CD4-positive, alpha-beta memory T cell (primary cell): ENCODE measurements at regions of chr2 and their contacts with region 1.

Region 1: GRCh38 chr2:223837287-223838061 is at the start of gene AP1S3:
- DNase-seq: peak; percentile 67 to 86 (median 69)
- H3K4me3 ChIP-seq: peak within 1 kb of the TSS; percentile 36 to 64
- H3K4me3 Mint-ChIP-seq: peak within 1 kb of the TSS; percentile 92 to 98 (median 94)
- H3K27ac ChIP-seq: peak within 1 kb of the TSS; percentile 52
- H3K27ac Mint-ChIP-seq: peak within 1 kb of the TSS; percentile 82 to 94 (median 90)
- H3K4me1 ChIP-seq: peaks cover 8% of the 10 kb centered on the region
- H3K4me1 Mint-ChIP-seq: peaks cover 9 to 12% (median 10%) of the 10 kb centered on the region in 4 donors
- H3K27me3 ChIP-seq: no peaks in the 10 kb centered on the region
- H3K27me3 Mint-ChIP-seq: no peaks in the 10 kb centered on the region
- total RNA-seq, gene AP1S3: 0.96 to 1.1 TPM

Region 2: GRCh38 chr2:223727562-223727961 is 109.9 kb before region 1 on chr2:
- CTCF ChIA-PET with region 1: no interaction called
- POLR2A ChIA-PET with region 1: no interaction called
- intact Hi-C with region 1: loop called (anchors 1 kb)
- DNase-seq: peak in 4 of 5 donors; percentile 21 to 25 (median 24)
- H3K4me3 ChIP-seq: no peak overlapping the region
- H3K4me3 Mint-ChIP-seq: no peak overlapping the region
- H3K27ac ChIP-seq: no peak overlapping the region
- H3K27ac Mint-ChIP-seq: no peak overlapping the region
- H3K4me1 ChIP-seq: no peaks in the 10 kb centered on the region
- H3K4me1 Mint-ChIP-seq: no peaks in the 10 kb centered on the region
- H3K27me3 ChIP-seq: no peaks in the 10 kb centered on the region
- H3K27me3 Mint-ChIP-seq: peaks cover 3 to 4% of the 10 kb centered on the region in 2 donors

Region 3: GRCh38 chr2:223865907-223866508 is 28.5 kb after region 1 on chr2:
- CTCF ChIA-PET with region 1: interaction called, 8 read pairs
- POLR2A ChIA-PET with region 1: no interaction called
- intact Hi-C with region 1: loop called (anchors 1 kb)
- DNase-seq: peak in 1 of 5 donors; percentile 9
- H3K4me3 ChIP-seq: no peak overlapping the region
- H3K4me3 Mint-ChIP-seq: peak overlapping the region in 4 of 8 donors; percentile 36 to 66 (median 52)
- H3K27ac ChIP-seq: no peak overlapping the region
- H3K27ac Mint-ChIP-seq: peak overlapping the region in 6 of 7 donors; percentile 13 to 74 (median 38)
- H3K4me1 ChIP-seq: peaks cover 24% of the 10 kb centered on the region
- H3K4me1 Mint-ChIP-seq: peaks cover 20 to 25% (median 21%) of the 10 kb centered on the region in 4 donors
- H3K27me3 ChIP-seq: no peaks in the 10 kb centered on the region
- H3K27me3 Mint-ChIP-seq: no peaks in the 10 kb centered on the region

Region 4: DNA sequence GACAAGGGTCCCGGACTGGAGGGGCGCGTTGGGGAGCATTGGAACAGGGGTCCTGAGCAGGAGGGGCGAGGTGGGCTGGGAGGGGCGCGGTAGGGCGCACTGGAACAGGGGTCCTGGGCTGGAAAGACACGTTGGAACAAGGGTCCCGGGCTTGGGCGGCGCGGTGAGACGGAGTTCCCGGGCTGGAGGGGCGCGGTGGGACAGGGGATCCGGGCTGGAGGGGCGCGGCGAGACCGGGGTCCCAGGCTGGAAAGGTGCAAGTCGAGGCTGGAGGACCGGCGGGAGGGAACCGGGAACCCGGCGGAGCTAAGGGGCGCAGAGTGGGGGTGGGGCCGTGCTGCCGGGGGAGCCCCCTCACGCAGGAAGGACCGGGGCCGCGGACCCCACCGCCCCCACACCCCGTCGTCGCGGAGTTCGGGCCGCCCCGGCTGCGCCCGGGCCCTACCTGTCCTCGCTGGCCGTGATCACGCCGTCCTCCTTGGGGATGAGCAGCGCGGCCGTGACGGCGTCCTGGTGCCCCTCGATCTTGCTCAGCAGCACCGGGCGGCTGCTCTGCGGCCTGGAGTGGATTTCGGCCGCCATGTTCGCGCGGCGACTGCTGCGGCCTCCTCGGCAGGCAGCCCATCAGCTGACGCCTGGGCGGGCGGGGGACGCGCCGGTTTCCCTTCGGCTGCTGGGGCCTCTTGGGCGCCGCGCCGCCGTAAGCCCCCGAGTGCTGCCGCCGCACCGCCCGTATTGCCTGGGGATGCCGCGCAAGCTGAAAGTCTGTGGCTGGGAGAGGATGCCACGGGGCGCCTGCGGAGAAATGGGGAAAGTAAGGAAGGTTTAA is 107.4 kb after region 1 on chr2 and contains the start of gene WDFY1:
- CTCF ChIA-PET with region 1: interaction called, 3 read pairs
- POLR2A ChIA-PET with region 1: no interaction called
- intact Hi-C with region 1: loop called (anchors 1 kb)
- DNase-seq: peak; percentile 71 to 79 (median 74)
- H3K4me3 ChIP-seq: peak within 1 kb of the TSS; percentile 20 to 87
- H3K4me3 Mint-ChIP-seq: peak within 1 kb of the TSS; percentile 90 to 95 (median 92)
- H3K27ac ChIP-seq: peak within 1 kb of the TSS; percentile 50
- H3K27ac Mint-ChIP-seq: peak within 1 kb of the TSS; percentile 84 to 95 (median 92)
- H3K4me1 ChIP-seq: peaks cover 46% of the 10 kb centered on the region
- H3K4me1 Mint-ChIP-seq: peaks cover 37 to 70% (median 53%) of the 10 kb centered on the region in 4 donors
- H3K27me3 ChIP-seq: no peaks in the 10 kb centered on the region
- H3K27me3 Mint-ChIP-seq: no peaks in the 10 kb centered on the region
- total RNA-seq, gene WDFY1: 31.5 to 37.7 TPM

Region 5: DNA sequence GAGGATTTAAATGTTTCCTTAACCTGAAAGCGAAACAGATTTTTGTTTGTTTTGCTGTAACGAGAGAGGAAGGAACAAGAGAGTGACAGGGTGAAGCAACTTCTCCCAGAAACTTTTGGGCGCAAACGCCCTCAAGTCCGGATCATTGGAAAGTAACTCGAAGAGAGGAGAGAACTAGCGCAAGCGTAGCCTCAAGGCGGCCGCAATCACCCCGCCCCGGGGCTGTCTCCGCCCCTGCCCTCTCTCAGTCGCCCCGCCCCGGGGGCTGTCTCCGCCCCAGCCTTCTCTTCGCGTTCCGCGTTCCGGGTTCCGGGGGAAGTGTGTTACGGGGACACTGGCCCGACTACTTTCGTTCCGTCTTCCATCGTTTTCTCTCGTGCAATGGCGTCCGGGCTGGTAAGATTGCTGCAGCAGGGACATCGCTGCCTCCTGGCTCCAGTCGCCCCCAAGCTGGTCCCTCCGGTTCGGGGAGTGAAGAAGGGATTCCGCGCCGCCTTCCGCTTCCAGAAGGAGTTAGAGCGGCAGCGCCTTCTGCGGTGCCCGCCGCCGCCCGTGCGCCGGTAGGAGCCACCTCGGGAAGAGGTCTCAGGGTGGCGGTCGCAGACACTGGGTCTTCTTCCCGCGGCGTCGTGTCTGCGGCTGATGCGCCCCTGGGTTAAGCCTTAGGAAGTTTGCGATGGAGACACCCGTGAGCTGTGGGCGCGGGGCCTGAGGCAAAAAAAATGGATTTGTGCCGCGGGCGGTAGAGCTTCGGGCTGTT is 119.8 kb after region 1 on chr2 and contains the start of gene MRPL44:
- CTCF ChIA-PET with region 1: no interaction called
- POLR2A ChIA-PET with region 1: interaction called, 3 read pairs
- intact Hi-C with region 1: loop called (anchors 5 kb)
- DNase-seq: peak; percentile 93 to 96 (median 95)
- H3K4me3 ChIP-seq: peak within 1 kb of the TSS; percentile 79 to 85
- H3K4me3 Mint-ChIP-seq: peak within 1 kb of the TSS; percentile 91 to 98 (median 96)
- H3K27ac ChIP-seq: peak within 1 kb of the TSS; percentile 80
- H3K27ac Mint-ChIP-seq: peak within 1 kb of the TSS; percentile 93 to 98 (median 96)
- H3K4me1 ChIP-seq: peaks cover 53% of the 10 kb centered on the region
- H3K4me1 Mint-ChIP-seq: peaks cover 43 to 75% (median 54%) of the 10 kb centered on the region in 4 donors
- H3K27me3 ChIP-seq: no peaks in the 10 kb centered on the region
- H3K27me3 Mint-ChIP-seq: no peaks in the 10 kb centered on the region
- total RNA-seq, gene MRPL44: 20.1 to 22.1 TPM